Vagina (tissue), 2 donors: ENCODE measurements at regions of chr2 and their contacts with region 1.

Region 1: GRCh38 chr2:103144837-103145236 is 383.0 kb downstream of the TMEM182 start:
- DNase-seq: no peak
- H3K4me3 ChIP-seq: no peak overlapping the region
- H3K27ac ChIP-seq: no peak overlapping the region
- H3K4me1 ChIP-seq: no peaks in the 10 kb centered on the region
- H3K27me3 ChIP-seq: no peaks in the 10 kb centered on the region
- CTCF ChIP-seq: no peak
- POLR2A ChIP-seq: no peak

Region 2: DNA sequence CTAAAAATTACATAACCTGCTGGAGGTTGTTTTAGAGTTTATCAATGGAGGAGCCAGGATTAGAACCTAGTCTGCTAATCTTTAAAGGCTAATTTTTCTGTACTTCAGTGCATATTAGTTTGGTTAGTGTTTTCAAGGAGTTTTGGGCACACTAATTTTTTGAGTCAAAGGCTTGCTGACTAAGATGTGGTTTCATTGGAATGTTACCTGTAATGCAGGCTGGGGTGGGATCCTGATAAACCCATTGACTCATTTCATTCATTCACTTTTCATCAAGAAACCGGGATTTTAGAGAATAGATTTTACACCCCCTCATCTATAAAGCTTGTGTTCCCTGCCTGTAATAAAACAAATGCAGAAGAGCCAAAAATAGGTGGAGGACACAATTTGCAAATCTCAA is 1245.0 kb before region 1 on chr2:
- intact Hi-C with region 1: loop called (anchors 5 kb)
- DNase-seq: no peak
- H3K4me3 ChIP-seq: no peak overlapping the region
- H3K27ac ChIP-seq: no peak overlapping the region
- H3K4me1 ChIP-seq: no peaks in the 10 kb centered on the region
- H3K27me3 ChIP-seq: no peaks in the 10 kb centered on the region
- CTCF ChIP-seq: no peak
- POLR2A ChIP-seq: no peak

Region 3: DNA sequence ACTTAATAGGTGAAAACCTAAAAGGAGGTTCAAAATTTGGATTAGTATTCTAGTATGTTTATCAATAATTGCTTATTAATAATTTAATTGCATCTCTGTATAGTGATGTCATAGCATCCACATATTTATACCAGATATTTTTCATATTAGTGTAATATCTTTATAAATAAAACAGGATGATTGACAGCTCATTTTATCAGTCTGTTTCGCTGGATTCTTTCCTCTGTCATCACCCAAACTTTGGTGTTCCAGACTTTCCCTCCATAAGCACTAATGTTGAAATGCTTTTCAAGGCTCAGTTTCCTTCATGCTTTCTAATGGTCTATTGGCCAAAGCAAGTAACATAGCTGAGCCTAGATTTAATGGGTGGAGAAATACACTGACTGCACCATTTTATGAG is 34.6 kb before region 1 on chr2:
- intact Hi-C with region 1: no loop called
- DNase-seq: no peak
- H3K4me3 ChIP-seq: no peak overlapping the region
- H3K27ac ChIP-seq: no peak overlapping the region
- H3K4me1 ChIP-seq: no peaks in the 10 kb centered on the region
- H3K27me3 ChIP-seq: no peaks in the 10 kb centered on the region
- CTCF ChIP-seq: no peak
- POLR2A ChIP-seq: no peak

Region 4: GRCh38 chr2:103208916-103209315 is 64.1 kb after region 1 on chr2:
- intact Hi-C with region 1: no loop called
- DNase-seq: no peak
- H3K4me3 ChIP-seq: no peak overlapping the region
- H3K27ac ChIP-seq: no peak overlapping the region
- H3K4me1 ChIP-seq: no peaks in the 10 kb centered on the region
- H3K27me3 ChIP-seq: no peaks in the 10 kb centered on the region
- CTCF ChIP-seq: no peak
- POLR2A ChIP-seq: no peak